GM12878 (cell line): ENCODE measurements at regions of chr1 and their contacts with region 1.

Region 1: DNA sequence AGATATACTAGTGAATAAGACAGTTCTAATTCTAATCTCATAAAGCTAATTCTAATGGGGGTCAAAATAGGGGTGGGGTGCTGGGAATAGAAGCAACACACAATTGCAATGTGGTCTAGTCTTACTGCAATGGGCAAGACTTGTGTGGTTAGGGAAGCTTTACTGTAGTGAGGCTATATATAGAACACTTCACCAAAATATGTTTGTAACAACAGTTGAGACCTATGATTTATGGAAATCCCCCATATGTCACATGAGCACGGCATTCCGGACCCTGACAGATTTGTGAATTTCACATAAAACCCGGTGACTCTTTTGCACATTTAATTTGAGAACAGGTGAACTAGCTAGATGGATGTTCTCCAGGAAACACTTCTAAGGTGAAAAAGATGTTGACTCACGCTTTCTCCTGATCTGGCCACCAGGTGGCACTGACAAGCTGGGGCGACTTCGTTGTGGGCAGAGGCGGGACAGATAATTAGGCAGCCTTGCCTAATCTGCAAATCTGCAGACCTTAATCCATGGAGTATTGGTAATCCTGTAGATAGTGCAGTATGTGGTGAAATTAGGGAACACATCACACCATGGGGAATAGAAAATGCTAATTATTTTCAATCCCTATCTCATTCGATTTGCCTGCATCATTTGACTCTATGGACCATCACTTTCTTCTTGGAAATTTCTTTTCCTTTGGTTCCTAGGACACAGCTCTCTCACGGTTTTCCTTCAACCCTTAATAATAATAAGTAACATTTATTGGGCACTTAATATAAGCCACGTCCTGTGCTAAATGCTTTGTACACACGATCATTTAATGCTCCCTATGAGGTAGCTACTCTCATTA is 37.7 kb downstream of the KIAA0040 start:
- DNase-seq: no peak
- ATAC-seq: peak; percentile 81
- H3K4me3 ChIP-seq: no peak overlapping the region
- H3K27ac ChIP-seq: no peak overlapping the region
- H3K4me1 ChIP-seq: peaks cover 7% of the 10 kb centered on the region; the same call in 1 of the 2 replicates
- H3K27me3 ChIP-seq: peaks cover 0 to 5% of the 10 kb centered on the region in 2 experiments; a peak in 2 of 4 replicates
- CTCF ChIP-seq: peak; percentile 88 to 91 (median 88)
- EP300 ChIP-seq: no peak
- POLR2A ChIP-seq: no peak
- RAD21 ChIP-seq: peak; percentile 99

Region 2: GRCh38 chr1:175075572-175076568 is 79.0 kb before region 1 on chr1:
- CTCF ChIA-PET with region 1: no interaction called
- POLR2A ChIA-PET with region 1: no interaction called
- RAD21 ChIA-PET with region 1: no interaction called
- SMC1A ChIA-PET with region 1: no interaction called
- in situ Hi-C with region 1: no loop called
- intact Hi-C with region 1: no loop called
- DNase-seq: no peak
- ATAC-seq: peak; percentile 57
- H3K4me3 ChIP-seq: no peak overlapping the region
- H3K27ac ChIP-seq: no peak overlapping the region
- H3K4me1 ChIP-seq: 0 out of 2 replicates have a peak, but pooled peaks cover 2% of the 10 kb centered on the region
- H3K27me3 ChIP-seq: peaks cover 0 to 1% of the 10 kb centered on the region in 2 experiments; a peak in 1 of 4 replicates
- CTCF ChIP-seq: no peak
- EP300 ChIP-seq: no peak
- POLR2A ChIP-seq: no peak
- RAD21 ChIP-seq: no peak

Region 3: DNA sequence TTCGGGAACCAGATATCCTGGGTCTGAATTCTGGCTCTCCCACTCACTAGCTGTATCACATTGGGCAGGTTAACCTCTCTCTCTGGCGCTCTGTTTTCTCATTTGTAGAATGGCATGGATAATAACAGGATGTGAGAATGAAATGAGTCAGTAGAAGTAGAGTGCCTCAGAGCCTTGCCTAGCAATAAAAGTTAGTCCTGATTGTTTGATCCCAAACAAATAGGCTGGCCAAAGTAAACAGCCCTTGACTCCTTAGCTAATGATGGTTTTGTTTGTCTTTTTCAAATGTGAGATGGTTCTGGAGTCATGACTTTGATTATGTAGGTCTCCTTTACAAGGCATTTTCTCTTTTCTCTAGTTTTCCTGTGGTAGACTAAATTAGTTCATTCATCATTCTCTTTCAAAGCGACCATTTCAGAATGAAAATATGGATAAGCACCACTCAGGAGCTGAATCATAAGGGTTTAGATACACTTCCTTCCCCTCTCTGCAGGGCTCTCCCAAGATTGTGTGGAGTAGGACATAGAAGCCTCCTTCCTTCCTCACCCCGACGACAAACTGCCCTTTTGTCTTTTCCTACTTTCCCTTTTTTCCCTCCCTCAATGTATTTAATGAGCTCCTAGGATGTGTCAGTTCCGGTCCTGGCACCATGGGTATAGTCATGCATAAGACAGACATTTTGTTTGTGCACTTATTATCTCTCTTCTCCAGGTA is 14.6 kb after region 1 on chr1:
- CTCF ChIA-PET with region 1: interaction called, 20 read pairs
- POLR2A ChIA-PET with region 1: interaction called, 3 read pairs
- RAD21 ChIA-PET with region 1: interaction called, 6 read pairs
- SMC1A ChIA-PET with region 1: interaction called, 20 read pairs
- in situ Hi-C with region 1: no loop called
- intact Hi-C with region 1: no loop called
- DNase-seq: no peak
- ATAC-seq: no peak
- H3K4me3 ChIP-seq: no peak overlapping the region
- H3K27ac ChIP-seq: no peak overlapping the region
- H3K4me1 ChIP-seq: peaks cover 2% of the 10 kb centered on the region; the same call in 1 of the 2 replicates
- H3K27me3 ChIP-seq: no peaks in the 10 kb centered on the region
- CTCF ChIP-seq: no peak
- EP300 ChIP-seq: no peak
- POLR2A ChIP-seq: no peak
- RAD21 ChIP-seq: no peak

Region 4: DNA sequence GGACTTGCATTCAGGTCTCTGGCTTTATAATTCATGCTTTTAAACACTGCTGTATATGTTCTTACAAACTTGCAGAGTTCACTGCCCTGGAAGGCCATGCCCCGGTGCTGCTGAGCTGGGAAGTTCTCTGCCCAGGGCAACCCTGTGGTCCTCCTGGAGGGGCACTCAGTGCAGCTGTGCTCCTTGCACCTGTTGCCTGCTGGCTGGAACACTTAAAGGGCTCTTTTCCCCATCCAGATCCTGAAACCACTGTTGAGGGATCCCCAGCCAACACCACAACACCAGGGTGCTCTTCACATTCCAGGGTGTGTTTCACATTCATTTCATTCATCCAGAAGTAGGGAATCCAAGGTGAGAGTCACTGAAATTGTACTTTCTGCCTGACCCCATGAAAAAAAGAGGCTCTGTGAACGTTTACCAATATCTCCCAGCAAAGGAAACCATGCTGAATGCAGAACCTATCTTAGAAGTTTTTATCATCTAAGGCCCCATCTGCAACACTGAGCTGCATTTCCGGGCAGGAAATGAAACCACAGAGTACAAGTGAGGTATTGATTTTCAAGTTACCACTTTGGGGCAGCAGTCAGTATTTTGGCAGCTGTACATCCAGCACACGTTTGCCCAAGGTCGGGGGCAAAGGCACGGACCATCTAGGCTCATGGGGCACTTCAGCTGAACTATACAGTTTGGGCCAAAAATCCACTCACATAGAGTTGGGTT is 54.1 kb after region 1 on chr1:
- CTCF ChIA-PET with region 1: interaction called, 15 read pairs
- POLR2A ChIA-PET with region 1: no interaction called
- RAD21 ChIA-PET with region 1: interaction called, 14 read pairs
- SMC1A ChIA-PET with region 1: interaction called, 13 read pairs
- in situ Hi-C with region 1: no loop called
- intact Hi-C with region 1: no loop called
- DNase-seq: peak; percentile 62
- ATAC-seq: peak; percentile 85
- H3K4me3 ChIP-seq: peak overlapping the region; percentile 30; the same call in 1 of the 2 replicates
- H3K27ac ChIP-seq: peak overlapping the region; percentile 78
- H3K4me1 ChIP-seq: peaks cover 27% of the 10 kb centered on the region
- H3K27me3 ChIP-seq: no peaks in the 10 kb centered on the region
- CTCF ChIP-seq: no peak
- EP300 ChIP-seq: no peak
- POLR2A ChIP-seq: peak; percentile 40; the same call in 1 of the 2 replicates
- RAD21 ChIP-seq: no peak

Region 5: DNA sequence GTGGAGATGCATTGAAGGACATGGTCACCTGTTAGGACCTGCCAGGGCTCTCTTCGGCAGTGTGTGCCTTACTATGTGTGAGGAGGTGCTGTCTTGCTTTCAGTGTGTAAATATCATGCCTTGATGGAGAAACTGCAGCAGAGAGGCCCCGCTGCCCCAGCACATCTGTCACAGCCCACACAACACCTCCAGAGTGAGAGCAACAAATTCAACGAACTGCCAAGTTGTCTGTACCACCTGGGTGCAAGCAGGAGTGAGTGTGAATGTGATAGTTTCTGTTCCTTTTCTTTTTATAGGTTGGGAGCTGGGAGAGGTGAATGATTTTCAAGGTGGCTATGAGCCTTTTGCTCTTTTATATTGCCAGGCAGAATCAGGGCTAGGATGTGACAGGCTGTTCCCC is 152.3 kb after region 1 on chr1:
- CTCF ChIA-PET with region 1: interaction called, 482 read pairs
- POLR2A ChIA-PET with region 1: no interaction called
- RAD21 ChIA-PET with region 1: interaction called, 15 read pairs
- SMC1A ChIA-PET with region 1: interaction called, 10 read pairs
- in situ Hi-C with region 1: no loop called
- intact Hi-C with region 1: no loop called
- DNase-seq: no peak
- ATAC-seq: peak; percentile 88
- H3K4me3 ChIP-seq: no peak overlapping the region
- H3K27ac ChIP-seq: no peak overlapping the region
- H3K4me1 ChIP-seq: peaks cover 6% of the 10 kb centered on the region
- H3K27me3 ChIP-seq: no peaks in the 10 kb centered on the region
- CTCF ChIP-seq: no peak
- EP300 ChIP-seq: peak; percentile 70 to 88; a peak in 2 of 4 replicates
- POLR2A ChIP-seq: no peak
- RAD21 ChIP-seq: no peak

Region 6: DNA sequence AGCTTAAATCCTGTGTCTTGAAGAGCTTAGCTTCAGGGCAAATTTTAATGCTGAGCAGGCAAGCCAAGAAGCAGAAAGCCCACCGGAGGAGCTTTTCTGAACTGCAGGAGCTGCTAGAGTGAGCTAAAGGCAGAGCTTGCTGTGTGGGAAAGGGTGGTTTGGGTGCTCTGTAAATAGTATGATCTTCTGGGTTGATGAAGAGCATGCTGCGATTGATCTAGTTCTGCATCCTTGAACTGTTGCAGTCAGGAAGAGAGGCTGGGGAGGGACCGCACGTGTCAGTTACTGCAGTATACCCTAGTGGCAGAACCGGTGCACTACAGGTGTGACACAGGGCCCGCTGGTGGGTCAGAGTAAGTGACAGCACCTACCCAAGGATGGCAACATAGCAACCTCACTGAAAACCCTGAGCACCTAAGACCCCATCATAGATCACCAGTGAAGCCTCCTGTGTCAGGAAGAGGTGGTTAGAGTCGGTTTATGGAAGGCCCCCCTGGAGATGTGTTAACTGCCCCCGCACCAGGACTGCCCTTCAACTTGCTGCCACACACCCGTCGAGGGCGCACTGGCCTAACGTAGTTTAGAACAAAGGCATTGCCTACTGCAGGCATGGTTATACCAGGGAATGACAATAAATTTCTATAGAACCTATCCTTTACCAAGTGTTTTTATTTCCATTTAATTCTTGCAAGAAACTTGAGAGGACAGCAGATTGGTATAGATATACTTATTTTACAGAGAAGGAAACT is 183.7 kb after region 1 on chr1:
- CTCF ChIA-PET with region 1: interaction called, 129 read pairs
- POLR2A ChIA-PET with region 1: no interaction called
- RAD21 ChIA-PET with region 1: interaction called, 16 read pairs
- SMC1A ChIA-PET with region 1: interaction called, 15 read pairs
- in situ Hi-C with region 1: no loop called
- intact Hi-C with region 1: no loop called
- DNase-seq: no peak
- ATAC-seq: peak; percentile 99
- H3K4me3 ChIP-seq: no peak overlapping the region
- H3K27ac ChIP-seq: no peak overlapping the region
- H3K4me1 ChIP-seq: no peaks in the 10 kb centered on the region
- H3K27me3 ChIP-seq: peaks cover 2 to 7% of the 10 kb centered on the region in 2 experiments; a peak in 3 of 4 replicates
- CTCF ChIP-seq: peak; percentile 40 to 80 (median 74)
- EP300 ChIP-seq: no peak
- POLR2A ChIP-seq: no peak
- RAD21 ChIP-seq: no peak

Region 7: GRCh38 chr1:175742790-175743459 is 588.1 kb after region 1 on chr1:
- CTCF ChIA-PET with region 1: interaction called, 5 read pairs
- POLR2A ChIA-PET with region 1: no interaction called
- RAD21 ChIA-PET with region 1: interaction called, 3 read pairs
- SMC1A ChIA-PET with region 1: no interaction called
- in situ Hi-C with region 1: no loop called
- intact Hi-C with region 1: loop called (anchors 10 kb)
- DNase-seq: no peak
- ATAC-seq: peak; percentile 66
- H3K4me3 ChIP-seq: no peak overlapping the region
- H3K27ac ChIP-seq: no peak overlapping the region
- H3K4me1 ChIP-seq: no peaks in the 10 kb centered on the region
- H3K27me3 ChIP-seq: 0 out of 4 replicates have a peak, but pooled peaks cover 0 to 4% of the 10 kb centered on the region in 2 experiments
- CTCF ChIP-seq: no peak
- EP300 ChIP-seq: no peak
- POLR2A ChIP-seq: no peak
- RAD21 ChIP-seq: no peak